Right ventricle myocardium inferior (tissue), 1 donor: ENCODE measurements at regions of chr7 and their contacts with region 1.

Region 1: GRCh38 chr7:41003031-41003925 is 699.6 kb downstream of the INHBA start:
- DNase-seq: no peak
- ATAC-seq: no peak

Region 2: GRCh38 chr7:40833888-40834234 is 169.4 kb before region 1 on chr7:
- intact Hi-C with region 1: no loop called
- DNase-seq: no peak
- ATAC-seq: no peak

Region 3: GRCh38 chr7:41696314-41696916 is 693.1 kb after region 1 on chr7:
- intact Hi-C with region 1: loop called (anchors 10 kb)
- DNase-seq: peak; percentile 80
- ATAC-seq: peak; percentile 81